ENCODE measurements at regions of chr14 and their contacts with region 1.

Region 1: DNA sequence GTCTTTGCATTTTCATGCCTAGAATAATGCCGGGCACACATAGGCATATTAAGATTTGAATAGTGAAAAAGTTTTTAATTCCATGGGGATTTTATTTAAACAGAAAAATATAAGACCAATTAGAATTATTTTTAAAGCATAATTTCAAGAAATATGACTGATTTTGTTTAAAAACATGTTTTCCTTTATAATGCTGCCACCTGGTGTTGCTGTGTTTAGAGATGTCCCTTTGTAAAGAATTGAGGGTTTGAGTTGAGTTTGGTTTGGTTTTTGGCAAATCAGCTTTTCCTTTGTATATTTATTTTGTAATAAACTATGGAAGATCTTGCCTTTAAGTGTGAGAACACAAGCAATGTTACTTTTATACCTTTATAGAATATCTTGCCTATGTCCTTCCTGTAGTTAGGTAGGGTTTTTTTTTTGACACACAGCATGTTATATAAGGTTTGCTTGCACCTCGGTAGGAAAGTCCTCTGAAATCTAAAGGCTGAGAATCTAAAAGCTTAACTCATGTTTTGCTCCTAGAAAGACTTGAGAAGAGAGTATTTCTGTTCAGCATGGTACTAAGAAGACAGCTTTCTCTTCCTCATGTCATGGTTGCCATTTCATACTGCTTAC is 31.4 kb upstream of the SNAPC1 start:
- DNase-seq: no peak
- H3K4me3 ChIP-seq: no peak overlapping the region
- H3K27ac ChIP-seq: peak overlapping the region; percentile 16 to 66
- H3K4me1 ChIP-seq: peaks cover 0 to 4% of the 10 kb centered on the region in 2 experiments; a peak in 1 of 4 replicates
- H3K27me3 ChIP-seq: no peaks in the 10 kb centered on the region
- CTCF ChIP-seq: peak; percentile 76
- EP300 ChIP-seq: no peak
- RAD21 ChIP-seq: peak; percentile 76

Region 2: DNA sequence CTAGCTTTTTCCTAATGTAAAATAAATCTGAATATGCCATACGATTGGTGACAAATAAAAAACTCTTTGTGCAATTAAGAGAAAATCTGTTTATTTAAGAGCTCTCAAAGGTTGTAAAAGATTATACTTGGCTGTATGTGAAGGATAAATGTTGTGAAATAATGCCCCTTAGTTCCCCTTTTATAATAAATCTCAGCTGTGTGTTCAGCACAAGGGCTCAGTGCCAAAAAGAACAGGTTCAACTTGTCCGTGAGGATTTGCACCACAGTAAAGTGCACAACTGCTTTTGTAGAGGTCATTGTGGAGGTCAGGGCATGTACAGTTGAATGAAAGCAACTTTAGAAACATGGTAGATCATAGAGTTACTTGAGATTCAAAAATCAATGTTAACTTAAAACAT is 868.6 kb before region 1 on chr14:
- CTCF ChIA-PET with region 1: no interaction called
- POLR2A ChIA-PET with region 1: no interaction called
- DNase-seq: no peak
- H3K4me3 ChIP-seq: no peak overlapping the region
- H3K27ac ChIP-seq: no peak overlapping the region
- H3K4me1 ChIP-seq: peaks cover 2 to 8% of the 10 kb centered on the region in 2 experiments; a peak in 2 of 4 replicates
- H3K27me3 ChIP-seq: no peaks in the 10 kb centered on the region
- CTCF ChIP-seq: no peak
- EP300 ChIP-seq: no peak
- RAD21 ChIP-seq: no peak

Region 3: GRCh38 chr14:61461808-61462275 is 269.0 kb before region 1 on chr14:
- CTCF ChIA-PET with region 1: interaction called, 27 read pairs
- POLR2A ChIA-PET with region 1: no interaction called
- DNase-seq: peak; percentile 44
- H3K4me3 ChIP-seq: no peak overlapping the region; a peak in 1 of 4 replicates
- H3K27ac ChIP-seq: peak overlapping the region; percentile 51 to 97; a peak in 3 of 4 replicates
- H3K4me1 ChIP-seq: peaks cover 9 to 27% of the 10 kb centered on the region in 2 experiments
- H3K27me3 ChIP-seq: no peaks in the 10 kb centered on the region
- CTCF ChIP-seq: peak; percentile 78
- EP300 ChIP-seq: no peak
- RAD21 ChIP-seq: peak; percentile 97

Region 4: DNA sequence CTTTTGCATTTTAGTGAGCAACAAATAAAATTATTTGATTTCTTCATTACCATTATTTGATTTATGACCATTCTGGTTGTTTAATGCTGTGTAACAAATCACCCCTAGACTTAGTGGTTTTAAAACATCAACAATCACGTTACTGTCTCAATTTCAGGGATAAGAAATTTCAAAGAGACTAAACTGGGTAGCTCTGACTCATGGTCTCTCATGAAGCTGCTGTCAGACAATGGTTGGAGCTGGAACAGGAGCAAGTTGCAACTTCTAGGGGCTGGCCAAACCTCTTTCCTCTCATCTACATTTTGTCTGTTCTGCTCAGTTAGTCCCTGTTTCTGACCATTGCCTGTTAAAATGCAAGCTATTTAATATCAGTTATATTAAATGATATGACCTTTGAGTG is 797.4 kb after region 1 on chr14:
- CTCF ChIA-PET with region 1: no interaction called
- POLR2A ChIA-PET with region 1: no interaction called
- DNase-seq: no peak
- H3K4me3 ChIP-seq: no peak overlapping the region
- H3K27ac ChIP-seq: no peak overlapping the region
- H3K4me1 ChIP-seq: no peaks in the 10 kb centered on the region
- H3K27me3 ChIP-seq: no peaks in the 10 kb centered on the region
- CTCF ChIP-seq: no peak
- EP300 ChIP-seq: no peak
- RAD21 ChIP-seq: no peak